Activated naive CD4-positive, alpha-beta T cell treated with anti-CD3 and anti-CD28 coated beads for 36 hours (primary cell): ENCODE measurements at regions of chr16 and their contacts with region 1.

Region 1: DNA sequence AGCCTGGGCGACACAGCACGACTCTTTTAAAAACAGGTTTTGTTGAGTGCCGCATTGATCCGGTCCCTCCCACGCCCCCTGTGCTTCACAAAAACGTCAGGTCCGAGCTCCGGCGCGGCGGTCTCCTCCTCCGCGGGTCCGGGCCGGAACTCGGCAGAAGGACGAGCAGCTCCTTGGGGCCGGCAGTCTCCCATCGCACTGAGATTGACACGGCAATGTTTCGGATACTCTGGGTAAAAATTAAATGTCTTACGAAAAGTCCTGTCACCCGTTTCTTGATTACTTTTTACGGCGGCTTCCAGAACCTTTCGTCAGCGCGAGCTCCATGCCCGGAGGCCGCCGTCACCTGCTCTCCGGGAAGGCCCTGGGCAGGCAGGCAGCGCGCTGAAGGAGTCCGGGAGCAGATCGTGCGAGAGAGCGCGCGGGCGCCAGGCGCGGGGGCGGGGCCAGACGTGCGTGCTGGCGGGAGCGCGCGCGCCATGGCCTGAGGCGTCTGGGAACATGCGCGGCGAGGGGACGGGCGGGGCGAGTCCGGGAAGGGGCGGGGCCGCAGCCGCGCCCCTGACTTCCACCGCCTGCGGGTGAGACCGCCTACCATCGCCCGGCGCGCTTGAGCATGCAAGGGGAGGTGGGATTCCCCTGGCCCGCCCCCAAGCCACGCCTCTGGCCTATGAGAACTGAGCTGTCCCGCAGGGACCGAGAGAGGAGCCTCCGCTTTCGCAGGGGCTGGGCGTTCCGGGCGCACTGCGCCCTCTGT is 11.7 kb upstream of the SRL start:
- DNase-seq: peak; percentile 100
- H3K4me3 Mint-ChIP-seq: peak overlapping the region; percentile 99
- H3K27ac Mint-ChIP-seq: peak overlapping the region; percentile 98
- H3K4me1 Mint-ChIP-seq: peaks cover 8% of the 10 kb centered on the region
- H3K27me3 Mint-ChIP-seq: no peaks in the 10 kb centered on the region

Region 2: GRCh38 chr16:3611146-3611975 is 642.2 kb before region 1 on chr16 and contains the start of gene SLX4:
- CTCF ChIA-PET with region 1: no interaction called
- intact Hi-C with region 1: loop called (anchors 5 kb)
- DNase-seq: peak; percentile 89
- H3K4me3 Mint-ChIP-seq: peak within 1 kb of the TSS; percentile 100
- H3K27ac Mint-ChIP-seq: peak within 1 kb of the TSS; percentile 98
- H3K4me1 Mint-ChIP-seq: peaks cover 43% of the 10 kb centered on the region
- H3K27me3 Mint-ChIP-seq: no peaks in the 10 kb centered on the region
- total RNA-seq, gene SLX4: 14.0 to 14.1 TPM

Region 3: DNA sequence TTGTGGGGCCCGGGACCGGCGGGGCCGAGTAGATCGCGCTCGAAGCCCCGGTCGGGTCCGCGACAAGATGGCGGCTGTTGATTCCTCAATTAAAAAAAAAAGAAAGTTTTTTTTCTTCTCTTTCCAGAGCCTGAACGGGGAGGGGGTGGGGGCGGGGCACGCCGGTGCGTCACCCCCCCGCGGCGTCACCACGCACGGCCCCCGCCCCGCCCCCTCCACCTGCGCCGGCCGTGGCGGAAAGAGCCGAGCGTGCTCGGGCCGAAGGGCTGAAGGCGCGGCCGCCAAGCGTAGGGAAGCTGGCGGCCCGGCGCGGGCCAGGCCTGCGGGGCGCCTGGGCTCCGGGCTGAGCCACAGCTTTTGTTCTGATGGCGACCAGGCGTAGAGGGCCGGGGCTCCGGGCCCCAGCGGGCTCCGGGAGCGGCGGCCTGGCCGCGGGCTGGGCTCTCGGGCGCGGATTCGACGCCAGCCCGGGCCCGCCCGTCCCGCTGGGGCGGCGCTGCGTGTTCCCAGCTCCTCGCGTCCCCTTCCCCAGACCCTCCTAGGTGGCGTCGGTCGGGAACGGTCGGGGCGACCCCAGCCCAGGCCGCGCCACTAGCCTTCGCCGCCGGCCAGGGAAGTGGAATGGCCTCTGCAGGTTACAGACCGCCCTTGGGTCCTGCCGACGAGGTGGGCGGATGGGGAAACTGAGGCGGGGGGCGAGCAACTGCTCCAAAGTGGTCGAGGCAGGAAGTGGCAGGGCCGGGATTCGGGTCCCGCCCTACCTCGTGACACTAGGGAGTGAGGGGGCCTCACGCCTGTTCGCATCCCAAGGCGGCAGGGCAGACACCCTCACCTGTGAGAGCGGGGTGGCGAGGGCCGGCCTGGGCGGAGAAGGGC is 372.7 kb before region 1 on chr16 and contains the start of gene CREBBP:
- CTCF ChIA-PET with region 1: interaction called, 3 read pairs
- intact Hi-C with region 1: loop called (anchors 5 kb)
- DNase-seq: peak; percentile 85
- H3K4me3 Mint-ChIP-seq: peak within 1 kb of the TSS; percentile 88
- H3K27ac Mint-ChIP-seq: peak within 1 kb of the TSS; percentile 89
- H3K4me1 Mint-ChIP-seq: peaks cover 33% of the 10 kb centered on the region
- H3K27me3 Mint-ChIP-seq: no peaks in the 10 kb centered on the region
- total RNA-seq, gene CREBBP: 29.9 to 33.0 TPM

Region 4: GRCh38 chr16:4006397-4006999 is 247.1 kb before region 1 on chr16:
- CTCF ChIA-PET with region 1: no interaction called
- intact Hi-C with region 1: no loop called
- DNase-seq: no peak
- H3K4me3 Mint-ChIP-seq: no peak overlapping the region
- H3K27ac Mint-ChIP-seq: no peak overlapping the region
- H3K4me1 Mint-ChIP-seq: no peaks in the 10 kb centered on the region
- H3K27me3 Mint-ChIP-seq: no peaks in the 10 kb centered on the region

Region 5: GRCh38 chr16:4081521-4082021 is 172.0 kb before region 1 on chr16:
- CTCF ChIA-PET with region 1: interaction called, 3 read pairs
- intact Hi-C with region 1: loop called (anchors 1 kb)
- DNase-seq: peak; percentile 84
- H3K4me3 Mint-ChIP-seq: peak overlapping the region; percentile 35
- H3K27ac Mint-ChIP-seq: peak overlapping the region; percentile 48
- H3K4me1 Mint-ChIP-seq: peaks cover 51% of the 10 kb centered on the region
- H3K27me3 Mint-ChIP-seq: no peaks in the 10 kb centered on the region

Region 6: GRCh38 chr16:4200000-4200780 is 53.4 kb before region 1 on chr16:
- CTCF ChIA-PET with region 1: interaction called, 9 read pairs
- intact Hi-C with region 1: loop called (anchors 1 kb)
- DNase-seq: peak; percentile 62
- H3K4me3 Mint-ChIP-seq: no peak overlapping the region
- H3K27ac Mint-ChIP-seq: no peak overlapping the region
- H3K4me1 Mint-ChIP-seq: peaks cover 2% of the 10 kb centered on the region
- H3K27me3 Mint-ChIP-seq: peaks cover 2% of the 10 kb centered on the region

Region 7: GRCh38 chr16:4330277-4330874 is 76.8 kb after region 1 on chr16:
- CTCF ChIA-PET with region 1: interaction called, 6 read pairs
- intact Hi-C with region 1: loop called (anchors 2 kb)
- DNase-seq: peak; percentile 80
- H3K4me3 Mint-ChIP-seq: no peak overlapping the region
- H3K27ac Mint-ChIP-seq: no peak overlapping the region
- H3K4me1 Mint-ChIP-seq: peaks cover 4% of the 10 kb centered on the region
- H3K27me3 Mint-ChIP-seq: no peaks in the 10 kb centered on the region

Region 8: DNA sequence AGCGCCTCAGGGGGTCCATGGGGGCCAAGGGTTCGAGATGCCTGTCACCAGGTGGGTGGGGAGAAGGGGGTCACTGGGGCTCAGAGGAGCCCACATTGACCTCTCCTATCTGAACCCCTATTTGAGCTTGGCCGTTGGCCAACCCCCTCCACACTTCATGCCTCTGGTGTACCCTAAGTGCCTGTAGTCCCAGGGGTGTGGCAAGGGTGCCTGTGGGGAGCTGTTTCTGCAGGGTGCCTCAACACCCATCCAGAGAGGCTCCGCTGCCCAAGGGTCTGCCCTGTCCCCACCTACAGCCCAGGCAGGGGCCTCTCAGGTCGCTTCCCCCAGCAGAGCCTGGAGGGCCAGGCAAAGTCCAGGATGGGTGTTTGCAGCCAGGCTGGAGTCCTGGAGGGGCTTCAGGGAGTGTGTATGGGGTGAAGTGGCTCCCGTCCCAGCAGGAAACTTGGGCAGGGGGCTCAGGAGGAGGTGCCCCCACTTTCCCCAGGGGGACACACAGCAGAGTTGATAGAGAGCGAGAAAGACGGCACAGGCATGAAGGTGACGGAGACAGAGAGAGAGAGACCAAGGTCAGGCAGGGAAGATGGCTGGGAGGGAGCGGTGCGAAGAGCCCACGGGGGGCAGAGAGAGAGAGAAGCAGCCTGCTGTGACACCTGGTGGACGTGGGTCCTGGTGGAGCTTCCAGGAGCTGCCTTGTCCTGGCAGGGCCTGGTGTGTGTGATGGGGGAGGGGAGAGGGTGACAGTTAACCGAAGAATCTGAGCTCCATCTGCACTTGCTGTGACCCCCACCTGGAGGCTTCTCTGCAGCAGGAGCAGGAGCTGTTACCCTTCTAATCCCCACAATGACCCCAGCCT is 534.3 kb after region 1 on chr16 and contains the start of gene SEPTIN12:
- CTCF ChIA-PET with region 1: no interaction called
- intact Hi-C with region 1: no loop called
- DNase-seq: no peak
- H3K4me3 Mint-ChIP-seq: no peak within 1 kb of the TSS
- H3K27ac Mint-ChIP-seq: no peak within 1 kb of the TSS
- H3K4me1 Mint-ChIP-seq: no peaks in the 10 kb centered on the region
- H3K27me3 Mint-ChIP-seq: no peaks in the 10 kb centered on the region
- total RNA-seq, gene SEPTIN12: not detected